Dendritic cell treated with granulocyte-macrophage colony-stimulating factor and Interleukin-4, amounts not matched to agents 40 ng/mL and 50 ng/mL, for 4 days (primary cell): ENCODE measurements at regions of chr6 and their contacts with region 1.

Region 1: DNA sequence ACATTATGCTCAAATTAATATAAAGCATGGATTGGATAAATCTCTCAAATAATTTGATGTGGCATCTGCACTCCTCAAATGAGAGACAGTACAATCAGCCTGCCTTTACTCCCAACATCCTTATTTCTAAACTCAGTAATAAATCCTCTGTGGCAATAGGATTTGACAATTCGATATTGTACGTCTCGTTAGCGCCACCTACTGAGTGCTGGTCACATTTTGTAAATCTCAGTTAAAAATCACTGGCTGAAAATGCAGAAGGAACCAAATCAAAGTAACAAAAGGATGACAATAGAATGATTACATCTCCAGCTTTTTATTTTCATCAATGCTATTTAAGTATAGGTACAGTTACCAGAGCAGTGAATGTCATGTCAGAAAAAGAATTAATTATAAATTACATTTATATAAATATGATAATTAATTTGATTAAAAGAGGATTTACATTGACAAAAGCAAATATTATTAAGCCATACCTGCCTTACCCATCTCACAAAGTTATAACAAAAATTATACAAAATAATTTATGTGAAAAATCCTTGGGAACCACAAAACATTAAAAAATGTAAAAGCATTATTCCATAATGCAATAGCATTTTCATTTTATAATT is 20.2 kb upstream of the GJE1 start:
- H3K4me3 Mint-ChIP-seq: no peak overlapping the region
- H3K27ac Mint-ChIP-seq: no peak overlapping the region
- H3K4me1 Mint-ChIP-seq: no peaks in the 10 kb centered on the region
- H3K27me3 Mint-ChIP-seq: no peaks in the 10 kb centered on the region

Region 2: GRCh38 chr6:141532211-141532610 is 580.3 kb before region 1 on chr6:
- intact Hi-C with region 1: no loop called
- H3K4me3 Mint-ChIP-seq: no peak overlapping the region
- H3K27ac Mint-ChIP-seq: no peak overlapping the region
- H3K4me1 Mint-ChIP-seq: no peaks in the 10 kb centered on the region
- H3K27me3 Mint-ChIP-seq: no peaks in the 10 kb centered on the region

Region 3: DNA sequence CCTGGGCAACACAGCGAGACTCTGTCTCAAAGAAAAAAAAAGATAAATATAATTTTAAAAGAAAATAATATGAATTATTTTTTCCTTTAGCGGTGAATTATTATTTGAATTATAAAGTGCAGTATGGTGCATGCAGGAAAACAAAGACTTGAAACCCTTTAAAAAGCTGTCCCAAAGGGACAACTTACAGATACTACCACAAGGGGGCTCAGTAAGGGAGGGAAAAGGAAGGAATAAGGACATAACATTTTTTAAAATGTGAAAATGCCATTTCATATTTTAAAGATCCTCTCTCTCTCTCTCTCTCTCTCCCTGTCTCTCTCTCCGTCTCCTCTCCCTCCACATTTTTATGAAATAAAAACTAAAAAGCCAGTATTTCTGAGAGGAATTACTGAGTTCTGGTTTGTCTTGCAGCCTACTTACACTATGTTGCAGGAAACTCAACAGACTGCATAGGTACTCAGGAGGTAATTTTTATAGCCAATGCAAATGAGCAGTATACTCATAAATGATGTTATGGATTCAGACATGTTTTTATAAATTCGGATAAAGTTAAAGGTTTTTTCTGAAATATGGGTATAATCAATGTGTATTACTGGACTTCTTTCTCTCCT is 434.9 kb before region 1 on chr6:
- intact Hi-C with region 1: loop called (anchors 5 kb)
- H3K4me3 Mint-ChIP-seq: no peak overlapping the region
- H3K27ac Mint-ChIP-seq: no peak overlapping the region
- H3K4me1 Mint-ChIP-seq: no peaks in the 10 kb centered on the region
- H3K27me3 Mint-ChIP-seq: no peaks in the 10 kb centered on the region